Left ventricle myocardium superior (tissue), 1 donor: ENCODE measurements at regions of chr10 and their contacts with region 1.

Region 1: DNA sequence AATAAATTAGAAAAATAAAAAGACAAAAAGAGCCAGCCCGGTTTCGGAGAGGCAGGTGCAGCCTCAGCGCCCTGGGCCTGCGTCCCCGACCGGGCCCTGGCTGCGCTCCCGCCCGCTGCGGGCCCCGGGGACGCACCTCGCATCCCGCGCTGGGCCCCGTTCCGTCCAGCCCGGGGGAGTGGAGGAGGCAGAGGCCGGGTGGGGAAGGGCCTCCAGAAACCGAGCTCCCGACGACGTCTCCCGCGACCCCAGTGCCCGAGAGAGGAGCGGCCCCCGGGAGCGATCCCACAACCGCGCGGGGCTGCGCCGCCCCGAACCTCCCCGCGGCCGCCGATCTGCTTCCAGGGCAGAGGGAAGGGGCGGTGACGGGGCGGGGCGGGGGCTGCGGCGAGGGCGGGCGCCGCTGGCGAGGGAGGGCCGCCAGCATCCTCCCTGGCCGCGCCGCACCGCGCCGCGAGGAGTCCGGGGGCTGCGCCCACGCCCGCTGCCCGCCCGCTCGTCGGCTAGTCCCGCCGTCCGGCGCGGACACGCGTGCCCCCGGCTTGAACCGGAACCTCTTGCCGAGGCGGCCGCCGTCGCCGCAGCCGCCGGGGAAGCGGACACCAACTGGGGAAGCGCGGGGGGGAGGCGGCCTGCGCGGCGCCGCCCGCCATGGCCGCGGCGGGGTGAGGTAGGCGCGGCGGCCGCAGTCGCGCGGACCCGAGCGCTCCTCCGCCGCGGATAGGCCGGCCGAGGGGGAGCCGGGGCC is at the start of gene CCNY:
- DNase-seq: peak; percentile 90
- ATAC-seq: peak; percentile 92
- total RNA-seq, gene CCNY: 94.4 TPM

Region 2: GRCh38 chr10:35563261-35563891 is 227.1 kb after region 1 on chr10:
- intact Hi-C with region 1: loop called (anchors 5 kb)
- DNase-seq: peak; percentile 58
- ATAC-seq: peak; percentile 29